ENCODE measurements at regions of chr3 and their contacts with region 1.

Region 1: DNA sequence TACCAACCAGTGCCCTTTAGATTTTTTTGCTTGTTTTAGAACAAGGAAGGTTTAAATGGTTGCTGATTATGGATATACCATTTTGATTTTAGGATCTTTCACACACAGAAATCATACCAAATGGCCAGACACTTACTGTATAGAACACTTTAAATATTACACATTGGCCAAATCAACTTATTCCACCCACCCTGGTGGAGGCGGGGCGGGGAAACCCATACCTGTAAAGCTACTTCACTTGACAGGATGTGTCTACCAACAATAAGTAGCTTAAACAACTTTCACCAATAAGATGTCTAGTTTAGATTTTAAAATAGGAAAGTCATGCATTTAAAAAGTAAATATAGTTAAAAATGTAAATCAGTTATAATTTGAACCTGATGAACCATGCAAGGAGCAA is 17.0 kb upstream of the SFMBT1 start:
- DNase-seq: no peak
- ATAC-seq: no peak
- H3K4me3 ChIP-seq: no peak overlapping the region
- H3K27ac ChIP-seq: no peak overlapping the region
- H3K4me1 ChIP-seq: no peaks in the 10 kb centered on the region
- H3K27me3 ChIP-seq: peaks cover 13% of the 10 kb centered on the region
- CTCF ChIP-seq: no peak
- POLR2A ChIP-seq: no peak
- RAD21 ChIP-seq: no peak

Region 2: DNA sequence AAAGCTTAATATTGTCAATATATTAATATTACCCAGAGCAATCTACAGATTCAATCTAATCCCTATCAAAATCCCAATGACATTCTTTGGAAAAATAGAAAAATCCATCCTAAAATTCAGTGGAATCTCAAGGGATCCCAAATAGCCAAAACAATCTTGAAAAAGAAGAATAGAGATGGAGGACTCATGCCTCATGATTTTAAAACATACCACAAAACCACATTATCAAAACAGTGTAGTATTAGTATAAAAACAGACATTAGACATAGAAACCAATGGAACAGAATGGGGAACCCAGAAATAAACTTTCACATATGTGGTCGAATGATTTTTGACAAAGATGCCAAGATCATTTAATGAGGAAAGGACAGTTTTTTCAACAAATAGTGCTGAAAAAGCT is 306.8 kb before region 1 on chr3:
- CTCF ChIA-PET with region 1: no interaction called
- POLR2A ChIA-PET with region 1: no interaction called
- dilution Hi-C with region 1: no loop called
- in situ Hi-C with region 1: no loop called
- intact Hi-C with region 1: loop called (anchors 5 kb)
- DNase-seq: no peak
- ATAC-seq: no peak
- H3K4me3 ChIP-seq: no peak overlapping the region
- H3K27ac ChIP-seq: no peak overlapping the region
- H3K4me1 ChIP-seq: peaks cover 7% of the 10 kb centered on the region
- H3K27me3 ChIP-seq: no peaks in the 10 kb centered on the region
- CTCF ChIP-seq: no peak
- POLR2A ChIP-seq: no peak
- RAD21 ChIP-seq: no peak

Region 3: GRCh38 chr3:52973806-52974205 is 89.1 kb before region 1 on chr3:
- CTCF ChIA-PET with region 1: no interaction called
- POLR2A ChIA-PET with region 1: no interaction called
- dilution Hi-C with region 1: no loop called
- in situ Hi-C with region 1: no loop called
- intact Hi-C with region 1: no loop called
- DNase-seq: peak; percentile 59
- ATAC-seq: no peak; the same call in 1 of the 2 replicates
- H3K4me3 ChIP-seq: no peak overlapping the region
- H3K27ac ChIP-seq: no peak overlapping the region
- H3K4me1 ChIP-seq: no peaks in the 10 kb centered on the region
- H3K27me3 ChIP-seq: no peaks in the 10 kb centered on the region
- CTCF ChIP-seq: no peak
- POLR2A ChIP-seq: no peak
- RAD21 ChIP-seq: no peak

Measured in IMR-90 (cell line).